BJ (cell line): ENCODE measurements at regions of chr10 and their contacts with region 1.

Region 1: DNA sequence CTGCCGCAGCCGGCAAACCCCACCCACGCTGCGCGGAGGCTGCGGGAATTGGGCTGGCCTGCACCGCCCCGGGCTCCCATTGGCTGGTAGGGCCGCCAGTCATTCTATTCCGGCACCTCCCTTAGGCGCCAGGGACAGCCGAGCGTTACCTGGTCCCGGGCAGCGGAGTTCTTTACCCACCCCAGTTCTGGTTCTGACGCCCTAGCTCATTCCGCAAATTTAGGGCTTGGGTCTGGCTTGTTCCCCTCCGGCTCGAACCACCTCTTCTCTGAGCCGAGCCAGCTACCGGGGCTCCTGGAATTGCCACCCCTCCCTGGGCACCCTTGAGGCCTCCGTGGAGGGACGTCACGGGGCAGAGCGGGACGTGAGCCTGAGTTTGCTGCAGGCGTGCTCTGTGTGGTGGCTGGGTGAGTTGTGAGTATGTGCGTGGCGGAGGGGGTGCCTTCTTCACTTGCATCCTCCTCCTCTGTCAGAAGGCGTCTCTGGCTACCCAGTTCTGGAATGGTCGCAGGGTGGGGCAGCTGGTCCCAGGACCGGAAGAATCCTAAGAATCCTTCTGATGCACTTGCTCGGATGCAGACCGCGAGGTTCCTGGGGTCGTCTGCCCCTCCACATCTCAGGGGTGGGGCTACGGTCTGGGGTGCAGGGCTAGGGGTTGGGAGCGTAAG is at the starts of genes PDZD7 and SFXN3:
- DNase-seq: peak; percentile 41
- H3K4me3 ChIP-seq: peak within 1 kb of the TSS; percentile 76
- H3K27me3 ChIP-seq: 0 out of 2 replicates have a peak, but pooled peaks cover 2% of the 10 kb centered on the region
- CTCF ChIP-seq: no peak
- polyA plus RNA-seq, gene PDZD7: 0.53 and 0.86 TPM in 2 replicates
- polyA plus RNA-seq, gene SFXN3: 100 and 125 TPM in 2 replicates

Region 2: GRCh38 chr10:100878291-100878910 is 152.9 kb before region 1 on chr10:
- CTCF ChIA-PET with region 1: no interaction called
- POLR2A ChIA-PET with region 1: no interaction called
- DNase-seq: no peak
- H3K4me3 ChIP-seq: no peak overlapping the region
- H3K27me3 ChIP-seq: no peaks in the 10 kb centered on the region; the same call in 1 of the 2 replicates
- CTCF ChIP-seq: peak; percentile 85

Region 3: DNA sequence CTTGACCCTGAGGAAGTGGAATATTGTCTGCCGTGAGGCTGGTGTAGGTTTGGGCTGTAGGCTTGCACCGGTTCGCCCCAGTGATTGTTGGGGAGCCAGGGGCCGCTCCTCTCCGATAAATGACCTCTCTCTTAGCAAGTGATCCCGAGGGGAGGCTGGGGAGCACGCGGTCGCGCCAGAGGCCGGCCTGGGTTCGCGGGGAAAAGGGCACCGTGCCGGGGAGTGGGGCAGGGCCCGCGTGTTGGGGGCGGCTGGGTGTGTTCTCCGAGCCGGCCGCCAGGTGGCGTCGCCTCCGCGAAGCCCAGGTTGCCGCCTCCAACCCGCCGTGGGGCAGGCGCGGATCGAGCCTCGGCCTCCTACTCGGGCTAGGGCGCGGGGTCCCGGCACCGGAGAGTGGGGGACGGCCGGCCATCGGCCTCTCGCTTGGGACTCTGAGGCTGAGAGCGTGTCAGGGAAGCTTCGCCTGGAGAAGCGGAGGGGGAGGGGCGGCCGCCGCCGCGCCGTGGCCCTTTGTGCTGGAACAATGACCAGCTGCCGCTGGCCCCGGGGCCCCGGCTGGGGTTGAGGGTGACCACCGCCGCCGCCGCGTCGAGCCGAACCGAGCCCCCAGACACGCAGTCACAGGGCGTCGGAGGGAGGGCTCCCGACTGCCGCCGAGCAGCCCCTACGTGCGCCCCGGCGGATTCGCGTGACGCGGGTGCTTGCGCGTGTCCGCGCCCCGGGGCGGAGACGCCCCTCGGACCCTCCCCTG is 32.1 kb before region 1 on chr10:
- CTCF ChIA-PET with region 1: interaction called, 31 read pairs
- POLR2A ChIA-PET with region 1: no interaction called
- DNase-seq: no peak
- H3K4me3 ChIP-seq: peak overlapping the region; percentile 71
- H3K27me3 ChIP-seq: no peaks in the 10 kb centered on the region
- CTCF ChIP-seq: peak; percentile 67

Region 4: GRCh38 chr10:101042667-101043355 is 11.5 kb after region 1 on chr10:
- CTCF ChIA-PET with region 1: interaction called, 27 read pairs
- POLR2A ChIA-PET with region 1: interaction called, 4 read pairs
- DNase-seq: peak; percentile 92
- H3K4me3 ChIP-seq: peak overlapping the region; percentile 47
- H3K27me3 ChIP-seq: peaks cover 3% of the 10 kb centered on the region; the same call in 1 of the 2 replicates
- CTCF ChIP-seq: no peak

Region 5: DNA sequence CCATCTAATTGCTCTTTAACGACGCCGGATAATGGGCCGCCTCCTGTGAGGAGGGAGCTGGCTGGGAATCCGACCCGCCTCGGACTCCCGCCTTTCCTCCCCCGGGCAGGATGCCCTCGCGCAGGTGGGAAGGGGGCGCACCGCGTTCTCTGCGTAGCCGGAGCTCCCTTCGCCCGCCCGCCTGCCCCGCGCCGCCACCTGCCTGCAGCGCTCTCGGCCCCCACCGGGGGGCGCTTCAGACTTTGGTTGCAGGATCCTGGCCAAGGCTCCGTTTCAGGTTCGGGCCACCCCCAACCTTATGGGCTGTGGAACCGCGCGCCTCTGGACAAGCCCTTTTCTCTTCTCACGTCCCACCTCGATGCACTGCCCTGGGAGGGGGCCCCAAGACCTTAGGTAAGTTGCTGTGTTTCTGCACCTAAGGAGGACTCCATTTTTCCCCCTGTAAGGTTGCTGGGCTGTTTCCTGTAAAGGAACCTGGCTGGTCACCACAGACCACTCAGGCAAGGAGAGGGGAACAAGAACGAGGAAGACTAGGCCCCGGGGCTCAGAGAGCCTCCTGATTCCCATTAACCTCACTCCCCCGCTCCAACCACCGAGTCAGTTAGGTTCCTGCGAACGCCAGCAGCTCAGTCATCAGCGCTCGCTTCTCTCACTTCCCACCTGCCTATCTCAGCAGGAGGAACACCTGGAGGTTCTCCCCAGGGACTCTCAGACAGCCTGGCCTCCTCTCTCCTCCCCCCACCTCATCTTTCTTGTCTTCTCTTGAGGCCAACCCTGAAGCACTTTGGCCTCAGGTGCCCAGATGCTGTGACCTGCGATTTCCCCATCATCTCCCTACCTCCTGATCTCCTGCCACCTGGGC is 19.2 kb after region 1 on chr10:
- CTCF ChIA-PET with region 1: interaction called, 676 read pairs
- POLR2A ChIA-PET with region 1: no interaction called
- DNase-seq: no peak
- H3K4me3 ChIP-seq: peak overlapping the region; percentile 18
- H3K27me3 ChIP-seq: peaks cover 12% of the 10 kb centered on the region
- CTCF ChIP-seq: peak; percentile 88

Region 6: DNA sequence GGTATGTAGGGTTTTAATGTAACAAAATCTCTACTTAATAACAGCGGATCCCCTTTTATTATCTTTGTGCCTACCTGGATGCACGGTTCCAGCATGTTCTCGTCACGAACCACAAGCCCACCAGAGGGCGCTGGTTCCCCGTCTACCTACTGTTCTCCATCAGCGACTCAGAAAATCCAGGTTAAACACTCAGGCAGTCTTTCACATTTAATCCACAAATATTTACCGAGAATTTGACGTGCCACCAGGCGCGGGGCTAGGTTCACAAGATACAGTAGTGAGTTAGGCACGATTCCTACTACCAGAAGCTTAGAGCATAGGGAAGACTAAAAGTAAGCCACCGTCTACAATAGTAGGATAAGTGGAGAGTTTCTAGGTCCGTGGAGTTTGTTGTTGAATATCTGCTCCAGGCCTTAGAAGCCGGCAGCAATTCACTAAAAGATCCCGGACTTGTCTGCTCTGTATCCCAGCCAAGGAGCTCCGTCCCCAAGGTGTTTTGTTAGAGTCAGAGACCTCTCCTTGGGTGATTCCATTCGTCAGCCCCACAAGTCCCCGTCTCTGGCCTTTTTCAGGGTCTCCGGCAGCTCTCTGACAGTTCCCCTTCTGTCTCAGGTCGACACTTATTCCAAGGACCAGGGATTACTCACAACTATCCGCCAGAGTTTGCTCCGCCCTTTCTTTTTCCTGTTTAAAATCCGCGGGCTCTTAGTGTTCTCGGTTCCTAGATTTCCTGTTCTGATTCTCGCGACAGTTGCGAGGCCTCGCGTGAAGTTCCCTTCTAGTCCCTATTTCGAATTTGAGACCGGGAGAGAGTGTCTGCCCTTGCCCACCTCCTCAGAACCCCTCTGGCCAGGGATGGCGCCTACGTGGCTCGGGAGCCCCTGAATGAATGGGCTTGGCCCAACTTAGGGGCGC is 29.0 kb after region 1 on chr10:
- CTCF ChIA-PET with region 1: interaction called, 676 read pairs
- POLR2A ChIA-PET with region 1: no interaction called
- DNase-seq: no peak
- H3K4me3 ChIP-seq: peak overlapping the region; percentile 86
- H3K27me3 ChIP-seq: no peaks in the 10 kb centered on the region
- CTCF ChIP-seq: peak; percentile 87

Region 7: DNA sequence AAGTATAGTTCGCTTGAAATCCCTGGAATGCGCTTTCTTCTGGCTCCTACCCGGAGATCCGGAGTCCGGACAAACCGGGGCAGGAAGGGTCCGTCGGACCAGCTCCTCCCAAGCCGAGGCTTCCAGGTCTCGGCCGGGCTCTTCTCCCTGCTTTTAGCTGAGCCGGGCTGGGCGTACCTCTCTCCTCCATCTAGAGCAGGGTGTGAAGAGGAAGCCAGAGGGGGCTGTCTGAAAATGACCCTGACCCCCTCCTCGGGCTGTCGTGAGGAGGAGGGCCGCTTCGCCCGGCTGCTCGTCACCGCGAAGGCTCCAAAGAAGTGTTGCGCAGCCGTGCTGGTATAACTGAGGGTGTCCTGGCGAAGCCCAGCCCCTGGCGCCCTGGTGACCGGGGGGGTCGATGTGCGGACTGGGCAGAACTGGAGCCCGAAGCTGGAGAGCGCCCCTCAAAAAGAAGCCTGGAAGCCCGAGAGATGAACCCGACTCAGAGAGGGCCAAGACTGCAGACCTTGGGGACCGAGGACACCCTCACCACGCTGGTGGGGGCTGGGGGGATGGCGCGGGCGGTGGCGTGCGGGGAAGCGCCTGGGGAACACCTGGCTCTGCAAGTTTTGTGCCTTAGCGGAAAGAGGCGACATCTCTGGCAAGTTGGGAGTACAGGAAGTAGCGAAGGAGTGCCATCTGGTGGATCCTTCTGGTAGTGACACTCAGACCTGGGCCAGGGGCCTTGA is 36.3 kb after region 1 on chr10:
- CTCF ChIA-PET with region 1: interaction called, 676 read pairs
- POLR2A ChIA-PET with region 1: no interaction called
- DNase-seq: no peak
- H3K4me3 ChIP-seq: peak overlapping the region; percentile 50
- H3K27me3 ChIP-seq: peaks cover 2% of the 10 kb centered on the region
- CTCF ChIP-seq: peak; percentile 86

Region 8: GRCh38 chr10:101214446-101215396 is 183.5 kb after region 1 on chr10:
- CTCF ChIA-PET with region 1: no interaction called
- POLR2A ChIA-PET with region 1: no interaction called
- DNase-seq: no peak
- H3K4me3 ChIP-seq: no peak overlapping the region
- H3K27me3 ChIP-seq: peaks cover 48% of the 10 kb centered on the region
- CTCF ChIP-seq: peak; percentile 93